Endothelial cell of umbilical vein (primary cell): ENCODE measurements at regions of chr7 and their contacts with region 1.

Region 1: GRCh38 chr7:16062269-16062668 is 359.1 kb downstream of the CRPPA start:
- DNase-seq: peak; percentile 95
- H3K4me3 ChIP-seq: no peak overlapping the region
- H3K27ac ChIP-seq: peak overlapping the region; percentile 88
- H3K4me1 ChIP-seq: peaks cover 34% of the 10 kb centered on the region
- H3K27me3 ChIP-seq: no peaks in the 10 kb centered on the region
- CTCF ChIP-seq: no peak
- POLR2A ChIP-seq: no peak

Region 2: GRCh38 chr7:15130666-15131541 is 931.4 kb before region 1 on chr7:
- CTCF ChIA-PET with region 1: no interaction called
- POLR2A ChIA-PET with region 1: no interaction called
- dilution Hi-C with region 1: no loop called
- intact Hi-C with region 1: loop called (anchors 1 kb)
- DNase-seq: peak; percentile 86
- H3K4me3 ChIP-seq: peak overlapping the region in 1 of 3 experiments; percentile 37
- H3K27ac ChIP-seq: peak overlapping the region; percentile 98
- H3K4me1 ChIP-seq: peaks cover 38% of the 10 kb centered on the region
- H3K27me3 ChIP-seq: no peaks in the 10 kb centered on the region
- CTCF ChIP-seq: no peak
- POLR2A ChIP-seq: no peak

Region 3: GRCh38 chr7:15737601-15738000 is 324.7 kb before region 1 on chr7:
- CTCF ChIA-PET with region 1: no interaction called
- POLR2A ChIA-PET with region 1: no interaction called
- dilution Hi-C with region 1: no loop called
- intact Hi-C with region 1: loop called (anchors 2 kb)
- DNase-seq: peak; percentile 85
- H3K4me3 ChIP-seq: no peak overlapping the region
- H3K27ac ChIP-seq: no peak overlapping the region
- H3K4me1 ChIP-seq: no peaks in the 10 kb centered on the region
- H3K27me3 ChIP-seq: no peaks in the 10 kb centered on the region
- CTCF ChIP-seq: no peak
- POLR2A ChIP-seq: no peak

Region 4: DNA sequence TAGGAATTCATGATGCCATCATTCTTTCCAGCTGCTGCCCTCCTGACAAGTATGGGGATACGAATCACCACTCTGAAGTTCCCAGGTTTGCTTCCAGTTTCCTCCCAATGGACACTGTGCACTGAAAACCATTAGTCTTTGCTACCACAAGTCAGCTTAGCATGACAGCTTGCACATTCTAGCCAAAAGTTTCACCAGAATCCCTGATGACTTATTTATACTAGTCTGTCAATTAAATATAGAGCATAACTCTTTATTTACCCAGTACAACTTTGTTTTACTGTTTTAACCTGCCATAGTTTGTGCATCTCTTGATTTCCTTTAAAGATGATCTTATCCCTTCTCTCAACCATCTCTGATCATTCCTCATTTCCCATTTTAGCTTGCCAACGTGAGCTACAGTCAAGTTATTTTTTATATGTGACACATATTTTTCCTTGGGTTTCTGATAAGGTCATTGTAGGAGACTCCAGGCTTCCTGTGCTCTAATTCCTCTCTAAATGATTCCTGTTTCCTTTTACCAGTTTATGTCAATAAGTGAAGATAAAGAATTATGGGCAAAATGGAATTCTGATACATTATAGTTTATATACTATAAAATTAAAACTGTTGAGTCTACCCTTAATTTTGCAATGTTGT is 208.3 kb before region 1 on chr7:
- CTCF ChIA-PET with region 1: interaction called, 3 read pairs
- POLR2A ChIA-PET with region 1: no interaction called
- dilution Hi-C with region 1: no loop called
- intact Hi-C with region 1: loop called (anchors 1 kb)
- DNase-seq: peak; percentile 71
- H3K4me3 ChIP-seq: no peak overlapping the region
- H3K27ac ChIP-seq: peak overlapping the region; percentile 86
- H3K4me1 ChIP-seq: peaks cover 32% of the 10 kb centered on the region
- H3K27me3 ChIP-seq: no peaks in the 10 kb centered on the region
- CTCF ChIP-seq: no peak
- POLR2A ChIP-seq: no peak

Region 5: GRCh38 chr7:15998617-15999016 is 63.7 kb before region 1 on chr7:
- CTCF ChIA-PET with region 1: no interaction called
- POLR2A ChIA-PET with region 1: no interaction called
- dilution Hi-C with region 1: no loop called
- intact Hi-C with region 1: loop called (anchors 2 kb)
- DNase-seq: peak; percentile 59
- H3K4me3 ChIP-seq: no peak overlapping the region
- H3K27ac ChIP-seq: no peak overlapping the region
- H3K4me1 ChIP-seq: peaks cover 12% of the 10 kb centered on the region
- H3K27me3 ChIP-seq: no peaks in the 10 kb centered on the region
- CTCF ChIP-seq: no peak
- POLR2A ChIP-seq: no peak